Activated T-helper 2 cell treated with anti-CD3 and anti-CD28 coated beads, Interferon-gamma antibody, Interleukin-2, Interleukin-4, amounts not matched to agents 10 μg/mL and 5 μg/mL and 100 μg/mL, durations not matched to agents 14 hours and 24 hours and 36 hours (primary cell): ENCODE measurements at regions of chr1 and their contacts with region 1.

Region 1: GRCh38 chr1:212218911-212219310 is 66.3 kb upstream of the PPP2R5A start:
- DNase-seq: no peak
- H3K4me3 Mint-ChIP-seq: no peak overlapping the region
- H3K27ac Mint-ChIP-seq: peak overlapping the region; percentile 29
- H3K4me1 Mint-ChIP-seq: peaks cover 18% of the 10 kb centered on the region
- H3K27me3 Mint-ChIP-seq: peaks cover 2% of the 10 kb centered on the region

Region 2: DNA sequence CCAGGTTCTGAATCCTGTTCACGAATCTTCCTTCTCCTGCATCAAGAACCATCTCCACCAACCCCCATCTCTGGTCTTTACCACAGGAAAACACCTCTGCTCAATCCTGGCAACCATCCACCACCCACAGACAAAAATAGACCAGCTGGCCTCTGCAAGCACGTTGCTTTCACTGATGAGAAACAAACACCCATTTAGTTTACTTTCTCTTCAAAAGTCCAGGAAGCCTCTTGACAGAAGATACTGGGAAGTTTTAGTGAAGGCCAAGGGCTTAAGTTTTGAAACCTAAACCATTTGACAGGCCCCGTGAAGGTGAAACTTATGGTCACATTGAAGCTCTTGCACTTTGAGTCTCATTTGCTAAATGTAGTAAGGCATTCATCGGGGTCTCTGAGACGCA is 56.3 kb before region 1 on chr1:
- intact Hi-C with region 1: loop called (anchors 5 kb)
- DNase-seq: peak; percentile 17
- H3K4me3 Mint-ChIP-seq: no peak overlapping the region
- H3K27ac Mint-ChIP-seq: peak overlapping the region; percentile 7
- H3K4me1 Mint-ChIP-seq: peaks cover 27% of the 10 kb centered on the region
- H3K27me3 Mint-ChIP-seq: no peaks in the 10 kb centered on the region

Region 3: GRCh38 chr1:212234431-212235395 is 15.8 kb after region 1 on chr1:
- intact Hi-C with region 1: loop called (anchors 2 kb)
- DNase-seq: no peak
- H3K4me3 Mint-ChIP-seq: peak overlapping the region; percentile 22
- H3K27ac Mint-ChIP-seq: peak overlapping the region; percentile 69
- H3K4me1 Mint-ChIP-seq: peaks cover 49% of the 10 kb centered on the region
- H3K27me3 Mint-ChIP-seq: no peaks in the 10 kb centered on the region

Region 4: DNA sequence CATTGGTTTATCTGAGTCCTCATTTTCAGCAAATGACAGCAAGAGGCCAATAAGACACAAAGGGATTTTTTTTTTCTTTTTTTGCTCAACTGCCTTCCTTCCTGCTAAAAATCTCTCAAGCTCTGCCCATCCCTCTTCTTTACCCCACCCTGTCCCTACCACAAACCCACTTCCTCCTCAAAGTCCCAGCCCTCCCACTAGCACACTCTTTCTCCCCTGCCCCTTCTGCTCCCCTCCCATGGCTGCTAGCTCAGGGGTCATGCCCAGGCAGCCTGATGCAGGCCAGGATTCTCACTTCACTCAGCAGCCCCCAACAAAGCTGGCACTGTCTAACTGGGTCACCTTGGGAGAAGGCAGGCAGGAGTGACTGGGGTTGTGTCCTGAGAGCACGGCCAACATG is 37.5 kb after region 1 on chr1:
- intact Hi-C with region 1: loop called (anchors 5 kb)
- DNase-seq: peak; percentile 60
- H3K4me3 Mint-ChIP-seq: no peak overlapping the region
- H3K27ac Mint-ChIP-seq: peak overlapping the region; percentile 85
- H3K4me1 Mint-ChIP-seq: peaks cover 52% of the 10 kb centered on the region
- H3K27me3 Mint-ChIP-seq: no peaks in the 10 kb centered on the region

Region 5: DNA sequence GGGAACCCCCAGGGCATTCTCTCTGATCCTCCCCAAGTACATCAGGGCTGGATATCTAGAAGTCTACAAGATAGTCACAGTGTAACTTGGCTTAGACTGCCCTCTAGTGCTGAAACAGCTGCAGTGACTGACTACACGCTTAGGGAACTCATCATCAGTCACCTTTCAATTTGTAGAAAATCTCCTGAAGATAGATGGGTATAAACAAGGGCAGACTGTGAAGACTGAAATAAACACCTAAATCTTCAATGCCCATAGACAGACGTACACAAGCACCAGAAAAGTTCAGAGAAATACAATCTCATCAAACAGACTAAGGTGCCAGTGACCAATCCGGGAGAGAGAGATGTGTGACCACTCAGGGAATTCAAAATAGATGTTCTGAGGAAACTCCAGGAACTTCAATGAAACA is 149.2 kb after region 1 on chr1:
- intact Hi-C with region 1: no loop called
- DNase-seq: peak; percentile 42
- H3K4me3 Mint-ChIP-seq: no peak overlapping the region
- H3K27ac Mint-ChIP-seq: peak overlapping the region; percentile 17
- H3K4me1 Mint-ChIP-seq: peaks cover 4% of the 10 kb centered on the region
- H3K27me3 Mint-ChIP-seq: no peaks in the 10 kb centered on the region